H1 (cell line): ENCODE measurements at regions of chr16 and their contacts with region 1.

Region 1: GRCh38 chr16:27367461-27368357 is 34.3 kb upstream of the IL21R start:
- DNase-seq: peak; percentile 41 to 88
- H3K4me3 ChIP-seq: no peak overlapping the region
- H3K27ac ChIP-seq: no peak overlapping the region
- H3K4me1 ChIP-seq: no peaks in the 10 kb centered on the region; a peak in 3 of 7 replicates
- H3K27me3 ChIP-seq: no peaks in the 10 kb centered on the region
- CTCF ChIP-seq: peak; percentile 89 to 93 (median 89)
- EP300 ChIP-seq: no peak
- POLR2A ChIP-seq: no peak
- RAD21 ChIP-seq: peak; percentile 91 to 93

Region 2: DNA sequence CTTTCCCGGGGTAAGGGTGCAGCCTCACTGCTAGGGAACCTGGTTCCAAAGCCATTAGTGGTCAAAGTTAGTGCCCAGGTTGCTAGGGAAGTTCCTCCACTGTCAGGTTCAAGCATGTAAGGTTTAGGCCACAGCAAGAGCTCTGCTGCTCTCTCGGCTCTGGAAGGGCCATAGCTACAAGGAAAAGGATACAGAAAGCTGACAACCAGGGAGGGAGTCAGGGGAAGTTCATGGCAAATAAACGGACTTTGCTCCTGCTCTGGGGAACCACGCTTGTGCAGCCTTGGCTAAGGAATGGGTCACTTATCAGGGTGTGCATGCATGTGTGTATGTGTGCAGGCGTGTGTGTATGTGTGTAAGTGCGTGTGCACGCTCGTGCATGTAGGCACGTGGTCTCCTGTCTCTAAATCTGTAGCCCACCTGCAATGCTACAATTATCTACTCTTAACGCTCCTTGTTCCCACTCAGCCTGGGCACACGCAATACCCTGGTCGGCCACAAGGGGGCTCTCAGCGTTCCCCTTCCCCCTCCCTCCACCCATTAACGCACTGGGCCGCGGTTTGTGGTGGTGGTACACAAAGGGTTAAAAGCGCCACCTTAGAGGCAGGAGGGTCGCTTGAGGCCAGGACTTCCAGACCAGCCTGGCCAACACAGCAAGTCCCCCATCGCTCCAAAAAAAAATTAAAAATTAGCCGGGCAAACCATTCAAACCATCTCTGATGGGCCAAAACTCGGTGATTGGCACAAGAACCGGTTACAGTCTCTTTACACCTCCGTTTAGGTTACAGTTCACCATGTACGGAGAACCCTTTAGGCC is 212.8 kb before region 1 on chr16:
- CTCF ChIA-PET with region 1: interaction called, 22 read pairs
- POLR2A ChIA-PET with region 1: no interaction called
- DNase-seq: peak; percentile 41 to 95
- H3K4me3 ChIP-seq: peak overlapping the region in 1 of 4 experiments; percentile 49; a peak in 2 of 8 replicates
- H3K27ac ChIP-seq: no peak overlapping the region
- H3K4me1 ChIP-seq: no peaks in the 10 kb centered on the region
- H3K27me3 ChIP-seq: no peaks in the 10 kb centered on the region
- CTCF ChIP-seq: peak; percentile 83 to 96 (median 96)
- EP300 ChIP-seq: peak in 1 of 2 experiments; percentile 62; a peak in 1 of 3 replicates
- POLR2A ChIP-seq: no peak
- RAD21 ChIP-seq: peak; percentile 69 to 77

Region 3: DNA sequence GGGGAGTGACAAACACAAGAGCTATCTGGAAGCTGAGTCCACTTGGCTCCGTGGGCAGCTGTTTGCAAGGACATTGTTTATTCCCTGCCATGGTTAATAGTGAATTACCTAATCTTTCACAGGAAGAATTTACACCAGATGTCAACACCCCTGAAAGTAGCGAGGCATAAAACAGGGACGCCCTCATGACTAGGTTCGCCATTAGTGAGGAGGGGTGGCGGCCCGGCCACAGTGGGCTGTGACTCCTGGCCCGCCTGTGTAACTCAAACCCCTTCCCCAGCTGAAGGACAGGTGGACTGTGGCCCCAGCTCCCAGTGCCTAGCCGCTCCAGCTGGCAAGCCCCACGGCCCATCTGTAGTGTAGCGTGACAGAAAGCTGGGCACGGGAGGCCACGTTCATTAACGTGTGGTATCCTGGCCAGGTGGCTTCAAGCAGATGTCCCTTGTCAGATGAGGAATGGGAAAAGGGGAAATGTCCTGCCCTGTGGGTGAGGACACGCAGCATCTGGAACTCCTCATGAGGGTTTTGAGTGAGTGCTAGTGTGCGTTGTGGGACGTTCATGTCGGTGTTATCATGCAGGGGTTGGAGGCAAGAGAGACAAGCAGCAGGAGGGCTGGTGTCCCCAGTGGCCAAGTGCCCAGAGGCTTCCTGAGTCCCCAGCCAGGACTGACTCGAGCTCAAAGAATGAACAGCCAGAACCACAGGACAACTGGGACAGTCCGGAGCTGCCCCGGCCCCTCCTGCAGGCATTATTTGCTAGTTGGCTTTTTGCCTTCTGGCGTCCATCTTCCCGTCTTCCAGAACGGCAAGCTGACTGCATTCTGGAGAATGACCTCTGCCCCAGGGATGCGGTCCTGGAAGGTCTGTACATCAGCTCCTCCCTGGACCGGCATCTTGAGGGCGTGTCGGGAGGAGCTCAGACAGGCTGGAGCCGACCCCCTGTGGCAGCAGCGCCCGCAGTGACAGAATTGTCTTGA is 145.2 kb before region 1 on chr16:
- CTCF ChIA-PET with region 1: interaction called, 14 read pairs
- POLR2A ChIA-PET with region 1: no interaction called
- DNase-seq: no peak
- H3K4me3 ChIP-seq: no peak overlapping the region
- H3K27ac ChIP-seq: no peak overlapping the region
- H3K4me1 ChIP-seq: 0 out of 7 replicates have a peak, but pooled peaks cover 0 to 2% (median 0%) of the 10 kb centered on the region in 4 experiments
- H3K27me3 ChIP-seq: no peaks in the 10 kb centered on the region
- CTCF ChIP-seq: no peak
- EP300 ChIP-seq: no peak
- POLR2A ChIP-seq: no peak
- RAD21 ChIP-seq: no peak

Region 4: GRCh38 chr16:27251541-27252205 is 116.0 kb before region 1 on chr16:
- CTCF ChIA-PET with region 1: interaction called, 11 read pairs
- POLR2A ChIA-PET with region 1: no interaction called
- DNase-seq: no peak
- H3K4me3 ChIP-seq: no peak overlapping the region
- H3K27ac ChIP-seq: no peak overlapping the region
- H3K4me1 ChIP-seq: no peaks in the 10 kb centered on the region
- H3K27me3 ChIP-seq: no peaks in the 10 kb centered on the region
- CTCF ChIP-seq: no peak
- EP300 ChIP-seq: no peak
- POLR2A ChIP-seq: no peak
- RAD21 ChIP-seq: no peak

Region 5: GRCh38 chr16:27346819-27347218 is 20.9 kb before region 1 on chr16:
- CTCF ChIA-PET with region 1: interaction called, 15 read pairs
- POLR2A ChIA-PET with region 1: no interaction called
- DNase-seq: no peak
- H3K4me3 ChIP-seq: no peak overlapping the region
- H3K27ac ChIP-seq: no peak overlapping the region
- H3K4me1 ChIP-seq: no peaks in the 10 kb centered on the region
- H3K27me3 ChIP-seq: no peaks in the 10 kb centered on the region
- CTCF ChIP-seq: no peak
- EP300 ChIP-seq: no peak
- POLR2A ChIP-seq: no peak
- RAD21 ChIP-seq: no peak

Region 6: DNA sequence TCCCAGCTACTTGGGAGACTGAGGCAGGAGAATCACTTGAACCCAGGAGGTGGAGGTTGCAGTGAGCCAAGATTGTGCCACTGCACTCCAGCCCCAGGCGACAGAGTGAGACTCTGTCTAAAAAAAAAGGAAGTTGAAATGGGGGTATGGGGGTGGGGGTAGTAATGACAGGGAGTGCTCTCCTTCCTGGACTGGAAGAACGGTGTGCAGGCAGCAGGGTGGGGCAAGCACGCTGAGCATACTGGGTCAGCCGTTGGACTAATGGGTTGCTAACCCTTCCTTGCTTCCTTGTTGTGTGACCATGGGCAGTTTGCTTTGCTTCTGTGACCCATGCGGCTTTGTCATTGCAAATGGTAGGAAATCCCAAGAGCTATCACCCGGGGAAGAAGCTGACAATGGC is 198.7 kb after region 1 on chr16:
- CTCF ChIA-PET with region 1: no interaction called
- POLR2A ChIA-PET with region 1: no interaction called
- DNase-seq: no peak
- H3K4me3 ChIP-seq: no peak overlapping the region
- H3K27ac ChIP-seq: no peak overlapping the region
- H3K4me1 ChIP-seq: no peaks in the 10 kb centered on the region
- H3K27me3 ChIP-seq: no peaks in the 10 kb centered on the region
- CTCF ChIP-seq: no peak
- EP300 ChIP-seq: no peak
- POLR2A ChIP-seq: no peak
- RAD21 ChIP-seq: no peak

Region 7: GRCh38 chr16:27816561-27816960 is 448.9 kb after region 1 on chr16:
- CTCF ChIA-PET with region 1: no interaction called
- POLR2A ChIA-PET with region 1: no interaction called
- DNase-seq: no peak
- H3K4me3 ChIP-seq: no peak overlapping the region
- H3K27ac ChIP-seq: no peak overlapping the region
- H3K4me1 ChIP-seq: no peaks in the 10 kb centered on the region
- H3K27me3 ChIP-seq: no peaks in the 10 kb centered on the region
- CTCF ChIP-seq: no peak
- EP300 ChIP-seq: no peak
- POLR2A ChIP-seq: no peak
- RAD21 ChIP-seq: no peak